T-cell (primary cell): ENCODE measurements at regions of chr11 and their contacts with region 1.

Region 1: GRCh38 chr11:11841723-11842420 is at the start of gene USP47:
- DNase-seq: peak; percentile 88 to 97 (median 94)
- ATAC-seq: peak; percentile 85 to 88 (median 86)
- H3K4me3 ChIP-seq: peak within 1 kb of the TSS; percentile 70 to 88
- H3K4me3 Mint-ChIP-seq: no peak within 1 kb of the TSS
- H3K27ac ChIP-seq: peak within 1 kb of the TSS; percentile 96
- H3K27ac Mint-ChIP-seq: no peak within 1 kb of the TSS
- H3K4me1 ChIP-seq: peaks cover 15 to 38% of the 10 kb centered on the region in 2 experiments
- H3K4me1 Mint-ChIP-seq: peaks cover 0 to 3% (median 0%) of the 10 kb centered on the region in 3 donors
- H3K27me3 ChIP-seq: no peaks in the 10 kb centered on the region
- H3K27me3 Mint-ChIP-seq: peaks cover 5 to 13% of the 10 kb centered on the region in 2 donors
- total RNA-seq, gene USP47: 49.3 to 77.6 (median 58.6) TPM

Region 2: GRCh38 chr11:11641581-11641980 is 200.3 kb before region 1 on chr11:
- CTCF ChIA-PET with region 1: no interaction called
- POLR2A ChIA-PET with region 1: no interaction called
- DNase-seq: no peak
- ATAC-seq: no peak
- H3K4me3 ChIP-seq: no peak overlapping the region
- H3K4me3 Mint-ChIP-seq: no peak overlapping the region
- H3K27ac ChIP-seq: no peak overlapping the region
- H3K27ac Mint-ChIP-seq: no peak overlapping the region
- H3K4me1 ChIP-seq: no peaks in the 10 kb centered on the region
- H3K4me1 Mint-ChIP-seq: no peaks in the 10 kb centered on the region
- H3K27me3 ChIP-seq: peaks cover 0 to 6% of the 10 kb centered on the region in 2 experiments
- H3K27me3 Mint-ChIP-seq: peaks cover 43 to 49% of the 10 kb centered on the region in 2 donors

Region 3: GRCh38 chr11:11826260-11826659 is 15.6 kb before region 1 on chr11:
- CTCF ChIA-PET with region 1: no interaction called
- POLR2A ChIA-PET with region 1: no interaction called
- DNase-seq: peak in 6 of 35 experiments; percentile 9 to 41 (median 23)
- ATAC-seq: peak in 3 of 4 experiments; percentile 66 to 72 (median 68)
- H3K4me3 ChIP-seq: no peak overlapping the region
- H3K4me3 Mint-ChIP-seq: no peak overlapping the region
- H3K27ac ChIP-seq: no peak overlapping the region
- H3K27ac Mint-ChIP-seq: no peak overlapping the region
- H3K4me1 ChIP-seq: no peaks in the 10 kb centered on the region
- H3K4me1 Mint-ChIP-seq: no peaks in the 10 kb centered on the region
- H3K27me3 ChIP-seq: no peaks in the 10 kb centered on the region
- H3K27me3 Mint-ChIP-seq: peaks cover 0 to 1% of the 10 kb centered on the region in 2 donors

Region 4: GRCh38 chr11:11856638-11857037 is 14.8 kb after region 1 on chr11:
- CTCF ChIA-PET with region 1: interaction called, 5 to 20 read pairs
- POLR2A ChIA-PET with region 1: interaction called, 12 to 19 read pairs
- DNase-seq: peak in 15 of 35 experiments; percentile 11 to 63 (median 21)
- ATAC-seq: peak; percentile 79 to 97 (median 84)
- H3K4me3 ChIP-seq: no peak overlapping the region
- H3K4me3 Mint-ChIP-seq: peak overlapping the region in 1 of 3 donors; percentile 47
- H3K27ac ChIP-seq: peak overlapping the region; percentile 58
- H3K27ac Mint-ChIP-seq: peak overlapping the region; percentile 39 to 85
- H3K4me1 ChIP-seq: peaks cover 17 to 34% of the 10 kb centered on the region in 2 experiments
- H3K4me1 Mint-ChIP-seq: peaks cover 80 to 88% (median 80%) of the 10 kb centered on the region in 3 donors
- H3K27me3 ChIP-seq: no peaks in the 10 kb centered on the region
- H3K27me3 Mint-ChIP-seq: no peaks in the 10 kb centered on the region

Region 5: DNA sequence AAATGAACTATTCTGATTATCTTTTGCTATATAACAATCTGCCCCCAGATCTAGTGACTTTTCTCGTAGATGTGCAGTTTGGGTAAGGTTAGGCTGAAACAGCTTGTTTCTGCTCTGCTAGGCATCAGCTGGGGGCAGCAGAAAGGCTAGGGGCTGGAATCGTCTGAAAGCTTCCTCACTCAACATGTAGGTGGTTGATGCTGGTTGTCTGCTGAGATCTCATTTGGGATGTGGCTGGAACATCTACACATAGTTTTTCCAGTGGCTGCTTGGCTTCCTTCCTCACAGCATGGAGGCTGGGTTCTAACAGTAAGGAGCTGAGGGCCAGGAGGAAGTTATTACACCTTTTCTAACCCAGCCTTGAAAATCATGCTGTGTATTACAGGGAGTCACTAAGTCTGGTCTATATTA is 30.1 kb after region 1 on chr11:
- CTCF ChIA-PET with region 1: interaction called in 1 of 2 experiments, 4 read pairs
- POLR2A ChIA-PET with region 1: interaction called, 4 to 10 read pairs
- DNase-seq: no peak
- ATAC-seq: peak in 2 of 4 experiments; percentile 26 to 43
- H3K4me3 ChIP-seq: no peak overlapping the region
- H3K4me3 Mint-ChIP-seq: peak overlapping the region in 2 of 3 donors; percentile 3 to 41
- H3K27ac ChIP-seq: no peak overlapping the region
- H3K27ac Mint-ChIP-seq: no peak overlapping the region
- H3K4me1 ChIP-seq: peaks cover 18 to 28% of the 10 kb centered on the region in 2 experiments
- H3K4me1 Mint-ChIP-seq: peaks cover 72 to 84% (median 79%) of the 10 kb centered on the region in 3 donors
- H3K27me3 ChIP-seq: no peaks in the 10 kb centered on the region
- H3K27me3 Mint-ChIP-seq: no peaks in the 10 kb centered on the region

Region 6: DNA sequence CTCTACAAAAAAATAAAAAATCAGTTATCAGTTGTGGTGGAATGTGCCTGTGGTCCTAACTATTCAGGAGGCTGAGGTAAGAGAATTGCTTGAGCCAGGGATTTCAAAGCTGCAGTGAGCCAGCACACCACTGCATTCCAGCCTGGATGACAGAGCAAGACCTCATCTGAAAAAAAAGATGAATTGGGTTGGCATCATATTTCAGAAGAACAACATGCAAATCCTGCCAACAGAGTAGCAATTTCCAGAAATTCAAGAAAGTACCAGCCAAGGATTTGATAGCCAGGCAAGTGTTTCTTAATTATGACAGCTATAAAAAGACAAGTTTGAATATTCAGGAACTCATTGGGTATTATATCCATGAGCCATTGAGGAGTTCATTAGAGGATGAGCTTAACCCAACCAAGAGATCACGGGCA is 75.1 kb after region 1 on chr11:
- CTCF ChIA-PET with region 1: no interaction called
- POLR2A ChIA-PET with region 1: no interaction called
- DNase-seq: no peak
- ATAC-seq: no peak
- H3K4me3 ChIP-seq: no peak overlapping the region
- H3K4me3 Mint-ChIP-seq: no peak overlapping the region
- H3K27ac ChIP-seq: no peak overlapping the region
- H3K27ac Mint-ChIP-seq: peak overlapping the region in 1 of 2 donors; percentile 59
- H3K4me1 ChIP-seq: no peaks in the 10 kb centered on the region
- H3K4me1 Mint-ChIP-seq: peaks cover 0 to 14% (median 1%) of the 10 kb centered on the region in 3 donors
- H3K27me3 ChIP-seq: no peaks in the 10 kb centered on the region
- H3K27me3 Mint-ChIP-seq: no peaks in the 10 kb centered on the region